GM12878 (cell line): ENCODE measurements at regions of chr21 and their contacts with region 1.

Region 1: DNA sequence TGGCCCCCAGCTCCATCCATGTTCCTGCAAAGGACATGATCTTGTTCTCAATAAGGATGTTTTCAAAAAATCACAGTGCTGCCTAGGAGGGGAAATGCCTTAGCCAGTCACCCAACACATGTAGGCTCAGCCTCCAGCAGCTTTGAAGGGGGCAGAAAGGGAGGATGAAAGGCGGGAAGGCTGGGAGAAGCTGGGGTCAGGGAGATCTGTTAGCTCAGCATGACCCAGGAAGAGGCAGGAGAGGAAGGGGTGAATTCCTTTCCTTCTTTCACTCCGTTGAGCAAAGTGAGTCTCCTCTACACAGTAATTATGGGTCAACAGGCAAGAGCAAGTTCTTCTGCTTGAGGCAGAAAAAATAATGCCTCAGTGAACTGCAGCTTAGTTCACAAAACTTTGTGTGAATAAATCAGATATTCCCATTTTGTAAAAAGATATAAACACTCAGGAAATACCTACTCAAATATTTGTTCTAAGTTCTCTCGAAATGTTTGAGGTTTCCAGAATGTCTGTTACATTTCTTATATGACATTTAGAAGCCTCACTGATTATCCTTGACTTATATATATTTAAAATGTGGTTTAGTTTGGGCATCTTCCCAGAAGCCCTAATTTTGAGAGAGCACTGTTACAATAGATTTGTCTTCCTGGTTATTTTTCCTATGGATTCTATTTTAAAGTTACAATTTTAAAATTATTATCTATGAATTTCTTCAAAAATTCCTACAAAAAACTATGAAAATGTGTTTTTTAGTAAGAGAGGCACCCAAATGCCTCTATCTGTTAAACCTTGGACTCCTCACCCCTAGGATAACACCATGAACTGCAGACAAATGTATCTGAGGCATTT is 116.8 kb downstream of the KCNJ6 start:
- DNase-seq: no peak
- ATAC-seq: no peak
- H3K4me3 ChIP-seq: no peak overlapping the region
- H3K27ac ChIP-seq: no peak overlapping the region
- H3K4me1 ChIP-seq: no peaks in the 10 kb centered on the region
- H3K27me3 ChIP-seq: no peaks in the 10 kb centered on the region
- CTCF ChIP-seq: no peak
- EP300 ChIP-seq: no peak
- POLR2A ChIP-seq: no peak
- RAD21 ChIP-seq: no peak

Region 2: DNA sequence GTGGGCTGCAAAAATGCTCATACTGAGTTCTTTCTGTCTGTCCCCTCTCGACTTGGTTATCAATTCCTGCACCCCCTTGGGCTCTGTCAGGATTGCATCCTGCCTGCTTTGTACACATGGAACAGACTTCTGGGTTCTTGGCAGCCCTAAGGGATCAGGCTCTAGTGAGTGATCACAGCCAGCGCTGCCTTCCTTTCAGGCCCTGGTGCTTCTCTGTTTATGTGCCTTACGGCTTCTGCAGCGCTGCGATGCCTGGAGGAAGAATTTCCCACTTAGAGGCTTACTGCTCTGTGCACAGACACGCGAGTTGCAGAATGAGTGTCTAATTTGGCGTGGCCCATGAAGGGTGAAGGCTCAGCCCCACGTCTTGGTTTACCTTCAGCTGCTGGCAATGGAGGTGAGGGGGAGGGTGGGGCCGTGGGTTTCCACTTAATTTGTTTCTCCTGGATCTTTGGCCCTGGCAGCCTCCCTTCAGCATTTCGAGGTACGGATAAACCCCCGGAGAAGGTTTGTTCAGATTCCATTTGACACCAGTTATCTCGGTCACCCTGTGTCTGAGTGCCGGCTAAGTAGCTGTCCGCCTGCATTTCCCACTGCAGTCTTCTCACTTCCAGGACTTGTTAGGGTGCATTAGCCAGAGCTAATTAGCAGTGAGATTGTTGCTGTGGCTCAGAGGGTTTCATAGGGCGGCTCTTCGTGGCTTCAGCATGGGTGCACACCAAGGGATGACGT is 205.5 kb before region 1 on chr21:
- CTCF ChIA-PET with region 1: no interaction called
- POLR2A ChIA-PET with region 1: no interaction called
- RAD21 ChIA-PET with region 1: no interaction called
- SMC1A ChIA-PET with region 1: no interaction called
- in situ Hi-C with region 1: no loop called
- intact Hi-C with region 1: no loop called
- DNase-seq: no peak
- ATAC-seq: no peak
- H3K4me3 ChIP-seq: no peak overlapping the region
- H3K27ac ChIP-seq: no peak overlapping the region
- H3K4me1 ChIP-seq: no peaks in the 10 kb centered on the region
- H3K27me3 ChIP-seq: no peaks in the 10 kb centered on the region
- CTCF ChIP-seq: no peak
- EP300 ChIP-seq: no peak
- POLR2A ChIP-seq: no peak
- RAD21 ChIP-seq: no peak

Region 3: GRCh38 chr21:37711836-37712568 is 87.4 kb before region 1 on chr21:
- CTCF ChIA-PET with region 1: no interaction called
- POLR2A ChIA-PET with region 1: no interaction called
- RAD21 ChIA-PET with region 1: no interaction called
- SMC1A ChIA-PET with region 1: no interaction called
- in situ Hi-C with region 1: no loop called
- intact Hi-C with region 1: no loop called
- DNase-seq: no peak
- ATAC-seq: peak; percentile 97
- H3K4me3 ChIP-seq: no peak overlapping the region
- H3K27ac ChIP-seq: no peak overlapping the region
- H3K4me1 ChIP-seq: no peaks in the 10 kb centered on the region
- H3K27me3 ChIP-seq: no peaks in the 10 kb centered on the region
- CTCF ChIP-seq: peak; percentile 85 to 95 (median 89)
- EP300 ChIP-seq: no peak
- POLR2A ChIP-seq: no peak
- RAD21 ChIP-seq: peak; percentile 74

Region 4: DNA sequence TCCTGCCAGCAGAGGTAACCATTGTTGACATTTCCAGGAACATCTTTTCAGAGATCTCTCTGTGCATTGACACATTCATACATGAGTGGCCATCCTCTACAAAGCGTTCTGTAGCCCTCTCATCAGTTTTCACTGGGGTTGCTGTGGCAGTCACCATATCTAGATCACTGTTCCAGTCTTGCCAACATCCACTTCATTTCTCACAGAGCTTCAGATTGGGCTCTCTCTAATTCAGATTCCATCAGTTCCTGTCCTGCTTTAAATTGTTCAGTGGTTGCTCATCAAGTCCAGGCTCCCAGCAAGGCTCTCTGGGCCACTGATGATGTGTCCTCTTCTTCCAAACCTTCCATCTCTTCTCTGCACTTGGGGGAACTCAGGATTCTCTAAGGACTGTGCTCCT is 56.9 kb before region 1 on chr21:
- CTCF ChIA-PET with region 1: no interaction called
- POLR2A ChIA-PET with region 1: no interaction called
- RAD21 ChIA-PET with region 1: no interaction called
- SMC1A ChIA-PET with region 1: no interaction called
- in situ Hi-C with region 1: loop called (anchors 10 kb)
- intact Hi-C with region 1: no loop called
- DNase-seq: no peak
- ATAC-seq: no peak
- H3K4me3 ChIP-seq: no peak overlapping the region
- H3K27ac ChIP-seq: no peak overlapping the region
- H3K4me1 ChIP-seq: no peaks in the 10 kb centered on the region
- H3K27me3 ChIP-seq: no peaks in the 10 kb centered on the region; a peak in 1 of 4 replicates
- CTCF ChIP-seq: no peak
- EP300 ChIP-seq: no peak
- POLR2A ChIP-seq: no peak
- RAD21 ChIP-seq: no peak